ENCODE measurements at regions of chr10 and their contacts with region 1.

Region 1: GRCh38 chr10:77173615-77174461 is 463.8 kb downstream of the KCNMA1 start:
- DNase-seq: peak; percentile 60 to 87 (median 75)
- ATAC-seq: peak; percentile 70 to 72
- H3K4me3 ChIP-seq: no peak overlapping the region
- H3K27ac ChIP-seq: no peak overlapping the region
- H3K4me1 ChIP-seq: no peaks in the 10 kb centered on the region
- H3K27me3 ChIP-seq: no peaks in the 10 kb centered on the region

Region 2: GRCh38 chr10:77256346-77256745 is 82.5 kb after region 1 on chr10:
- intact Hi-C with region 1: no loop called
- DNase-seq: no peak
- ATAC-seq: no peak
- H3K4me3 ChIP-seq: no peak overlapping the region
- H3K27ac ChIP-seq: no peak overlapping the region
- H3K4me1 ChIP-seq: no peaks in the 10 kb centered on the region
- H3K27me3 ChIP-seq: no peaks in the 10 kb centered on the region

Region 3: DNA sequence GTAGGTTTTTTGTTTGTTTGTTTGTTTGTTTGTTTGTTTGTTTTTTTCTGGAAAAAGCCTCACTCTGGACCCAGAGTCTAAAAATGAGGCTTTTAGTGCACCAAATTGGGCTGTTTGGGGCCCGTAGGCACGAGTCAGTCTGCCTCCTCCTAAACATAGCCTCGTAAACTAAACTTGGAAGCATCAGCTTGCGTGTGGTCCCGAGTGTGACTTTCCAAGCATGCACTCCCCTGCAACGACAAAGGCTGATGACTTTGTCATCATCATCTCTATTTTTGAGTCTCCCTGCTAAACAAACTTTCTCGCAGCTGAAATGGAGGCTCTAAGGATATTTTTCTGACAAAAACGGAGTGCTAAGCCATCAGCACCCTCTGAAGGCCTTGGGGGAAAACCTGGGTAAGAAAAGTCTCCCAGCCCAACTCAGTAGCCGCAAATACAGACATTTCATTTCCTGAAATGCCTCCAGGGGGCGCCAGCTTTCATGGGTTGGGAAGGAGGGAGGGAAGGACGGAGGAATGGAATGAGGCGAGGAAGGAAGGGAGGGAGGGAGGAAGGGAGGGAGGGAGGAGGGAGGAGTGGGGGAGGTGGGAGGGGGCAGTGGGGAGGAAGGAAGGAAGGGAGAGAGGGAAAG is 217.9 kb after region 1 on chr10:
- intact Hi-C with region 1: loop called in 2 of 4 experiments (anchors 10 kb)
- DNase-seq: peak; percentile 75 to 86 (median 86)
- ATAC-seq: peak; percentile 61 to 67
- H3K4me3 ChIP-seq: no peak overlapping the region
- H3K27ac ChIP-seq: no peak overlapping the region
- H3K4me1 ChIP-seq: no peaks in the 10 kb centered on the region
- H3K27me3 ChIP-seq: no peaks in the 10 kb centered on the region

Region 4: DNA sequence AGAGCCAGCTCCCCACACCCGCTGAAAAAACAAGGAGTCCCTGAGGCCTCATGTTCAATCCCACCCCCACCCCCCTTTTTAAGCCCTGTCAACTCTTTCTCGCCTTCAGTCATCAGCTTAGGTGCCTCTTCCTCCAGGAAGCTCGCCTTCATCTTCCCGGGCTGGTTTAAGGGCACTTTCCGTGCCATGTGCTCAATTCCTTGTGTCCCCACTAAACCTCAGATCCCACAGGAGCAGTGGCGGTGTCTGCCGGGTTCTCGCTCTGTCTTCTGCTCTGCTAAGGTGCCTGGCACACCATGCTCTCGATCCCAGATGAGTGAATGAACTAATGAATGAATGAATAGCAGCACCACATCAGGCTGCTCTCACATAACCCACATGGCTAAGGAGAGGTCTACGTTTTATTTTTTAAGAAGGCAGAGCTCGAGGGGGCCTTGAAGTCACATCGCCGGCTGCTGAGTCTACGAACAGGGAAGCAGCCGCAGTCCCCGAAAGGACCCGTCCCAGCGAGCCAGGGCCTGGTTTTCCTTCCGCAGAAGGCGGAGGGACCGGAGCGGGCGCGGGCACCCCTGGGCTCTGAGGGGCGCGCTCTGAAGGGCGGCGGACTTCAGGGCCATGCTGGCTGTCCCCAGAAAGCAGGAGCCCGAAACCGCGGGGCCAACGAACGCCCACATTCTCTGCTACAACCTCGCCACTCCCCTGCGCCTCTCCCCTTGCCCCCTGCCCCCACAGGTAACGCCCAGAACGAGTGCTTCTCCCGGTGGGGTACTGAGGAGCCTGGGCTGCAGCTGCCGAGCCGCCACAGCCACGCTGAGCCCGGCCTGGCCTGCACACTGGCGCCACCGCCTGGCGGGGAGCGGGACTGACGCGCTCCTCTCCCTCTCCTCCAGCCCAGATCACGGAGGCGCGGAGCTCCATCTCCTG is 537.2 kb after region 1 on chr10:
- intact Hi-C with region 1: loop called in 1 of 4 experiments (anchors 5 kb)
- DNase-seq: peak; percentile 74 to 91 (median 88)
- ATAC-seq: peak; percentile 95 to 96
- H3K4me3 ChIP-seq: peak overlapping the region; percentile 40
- H3K27ac ChIP-seq: no peak overlapping the region
- H3K4me1 ChIP-seq: no peaks in the 10 kb centered on the region
- H3K27me3 ChIP-seq: no peaks in the 10 kb centered on the region